Activated B cell treated with CpG ODN at 0.5 μM for 24 hours (primary cell): ENCODE measurements at regions of chr15 and their contacts with region 1.

Region 1: GRCh38 chr15:57146506-57147201 is 228.2 kb downstream of the TCF12 start:
- DNase-seq: no peak
- ATAC-seq: no peak
- H3K4me3 Mint-ChIP-seq: peak overlapping the region; percentile 48
- H3K27ac Mint-ChIP-seq: no peak overlapping the region
- H3K4me1 Mint-ChIP-seq: peaks cover 16% of the 10 kb centered on the region
- H3K27me3 Mint-ChIP-seq: no peaks in the 10 kb centered on the region
- CTCF ChIP-seq: peak; percentile 42

Region 2: GRCh38 chr15:56491110-56491722 is 655.4 kb before region 1 on chr15:
- CTCF ChIA-PET with region 1: interaction called, 11 read pairs
- POLR2A ChIA-PET with region 1: no interaction called
- intact Hi-C with region 1: loop called (anchors 1 kb)
- DNase-seq: no peak
- ATAC-seq: peak; percentile 90
- H3K4me3 Mint-ChIP-seq: no peak overlapping the region
- H3K27ac Mint-ChIP-seq: no peak overlapping the region
- H3K4me1 Mint-ChIP-seq: no peaks in the 10 kb centered on the region
- H3K27me3 Mint-ChIP-seq: no peaks in the 10 kb centered on the region
- CTCF ChIP-seq: no peak

Region 3: GRCh38 chr15:57017024-57017423 is 129.6 kb before region 1 on chr15:
- CTCF ChIA-PET with region 1: interaction called, 3 read pairs
- POLR2A ChIA-PET with region 1: no interaction called
- intact Hi-C with region 1: loop called (anchors 5 kb)
- DNase-seq: no peak
- ATAC-seq: no peak
- H3K4me3 Mint-ChIP-seq: no peak overlapping the region
- H3K27ac Mint-ChIP-seq: no peak overlapping the region
- H3K4me1 Mint-ChIP-seq: peaks cover 18% of the 10 kb centered on the region
- H3K27me3 Mint-ChIP-seq: no peaks in the 10 kb centered on the region
- CTCF ChIP-seq: no peak

Region 4: DNA sequence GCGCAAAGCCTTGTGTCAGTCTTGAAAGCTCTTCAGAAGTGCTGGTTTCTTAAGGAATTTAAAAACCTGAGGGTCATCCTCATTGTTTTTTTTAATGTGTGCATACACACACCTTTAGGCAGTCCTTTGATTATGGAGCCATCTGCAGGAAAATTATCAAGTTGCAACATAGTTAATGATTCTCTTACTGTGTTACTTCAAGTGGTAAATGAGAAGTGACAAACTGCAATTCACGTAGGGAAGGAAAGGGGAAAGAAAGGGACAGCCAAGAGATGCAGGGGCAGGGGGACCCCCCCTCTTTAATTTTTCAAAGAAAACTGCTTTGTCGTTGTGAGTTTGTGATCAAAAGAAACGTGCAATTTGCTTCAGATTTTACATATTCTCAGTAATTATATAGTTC is 67.2 kb after region 1 on chr15:
- CTCF ChIA-PET with region 1: interaction called, 38 read pairs
- POLR2A ChIA-PET with region 1: no interaction called
- intact Hi-C with region 1: loop called (anchors 2 kb)
- DNase-seq: no peak
- ATAC-seq: peak; percentile 65
- H3K4me3 Mint-ChIP-seq: no peak overlapping the region
- H3K27ac Mint-ChIP-seq: no peak overlapping the region
- H3K4me1 Mint-ChIP-seq: peaks cover 32% of the 10 kb centered on the region
- H3K27me3 Mint-ChIP-seq: no peaks in the 10 kb centered on the region
- CTCF ChIP-seq: no peak

Region 5: DNA sequence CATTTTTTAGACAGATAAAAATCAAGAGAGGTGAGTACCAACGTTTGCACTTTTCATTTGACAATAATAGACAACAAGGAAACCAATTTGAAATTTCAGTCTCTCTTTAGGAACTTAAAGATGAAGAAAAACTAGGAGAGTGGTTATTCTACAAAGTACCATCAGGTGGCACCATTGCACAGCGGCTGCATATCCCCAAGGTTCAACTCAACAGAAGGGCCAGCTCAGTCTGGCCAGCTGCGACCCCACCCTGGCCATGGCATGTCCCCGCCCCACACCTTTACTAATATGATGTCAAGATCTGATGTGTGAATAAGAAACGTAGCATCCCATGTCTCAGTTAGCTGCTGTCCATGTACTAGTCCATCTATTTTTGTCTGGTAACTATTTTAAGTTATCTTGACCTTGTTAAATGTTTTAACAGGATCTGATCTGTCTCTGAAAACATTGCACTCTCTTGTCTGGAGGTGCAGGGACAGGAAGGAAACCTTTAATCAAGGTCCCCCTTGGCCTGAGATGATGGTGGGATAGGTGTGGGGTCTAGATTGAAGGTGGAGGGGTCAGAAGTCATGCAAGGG is 194.1 kb after region 1 on chr15:
- CTCF ChIA-PET with region 1: interaction called, 25 read pairs
- POLR2A ChIA-PET with region 1: no interaction called
- intact Hi-C with region 1: loop called (anchors 1 kb)
- DNase-seq: no peak
- ATAC-seq: peak; percentile 58
- H3K4me3 Mint-ChIP-seq: no peak overlapping the region
- H3K27ac Mint-ChIP-seq: no peak overlapping the region
- H3K4me1 Mint-ChIP-seq: peaks cover 2% of the 10 kb centered on the region
- H3K27me3 Mint-ChIP-seq: peaks cover 9% of the 10 kb centered on the region
- CTCF ChIP-seq: peak; percentile 79

Region 6: DNA sequence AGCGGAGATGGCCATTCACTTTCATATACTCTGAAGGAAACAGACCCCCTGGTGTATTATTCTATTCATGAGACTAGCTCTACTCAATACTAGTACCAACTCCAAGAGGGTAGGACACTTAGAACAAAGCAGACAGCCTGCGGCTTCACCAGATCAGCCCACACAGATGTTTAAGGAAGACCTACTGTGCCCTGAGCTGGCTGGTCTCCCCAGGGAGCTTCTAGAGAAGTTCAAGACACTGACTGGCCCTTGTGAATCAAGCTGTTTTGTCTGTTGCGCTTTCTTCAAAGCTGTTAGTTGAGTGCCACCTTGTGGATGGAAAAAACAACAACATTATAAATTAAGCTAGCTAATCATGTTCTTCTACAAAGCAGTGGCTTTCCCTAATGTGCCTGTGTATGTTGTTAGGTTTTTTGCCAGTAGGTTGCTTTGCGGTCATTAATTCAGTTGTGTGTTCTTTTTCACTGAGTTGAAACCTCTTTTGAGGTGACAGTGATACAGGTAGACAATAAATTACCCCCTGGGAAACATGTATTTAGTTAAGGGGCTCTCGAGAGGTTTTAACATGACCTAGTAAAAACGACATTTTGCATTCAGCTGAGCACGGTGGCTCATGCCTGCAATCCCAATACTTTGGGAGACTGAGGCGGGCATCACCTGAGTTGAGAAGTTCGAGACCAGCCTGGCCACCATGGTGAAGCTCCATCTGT is 380.9 kb after region 1 on chr15:
- CTCF ChIA-PET with region 1: interaction called, 125 read pairs
- POLR2A ChIA-PET with region 1: interaction called, 4 read pairs
- intact Hi-C with region 1: loop called (anchors 1 kb)
- DNase-seq: peak; percentile 25
- ATAC-seq: peak; percentile 99
- H3K4me3 Mint-ChIP-seq: no peak overlapping the region
- H3K27ac Mint-ChIP-seq: no peak overlapping the region
- H3K4me1 Mint-ChIP-seq: peaks cover 11% of the 10 kb centered on the region
- H3K27me3 Mint-ChIP-seq: peaks cover 3% of the 10 kb centered on the region
- CTCF ChIP-seq: no peak

Region 7: DNA sequence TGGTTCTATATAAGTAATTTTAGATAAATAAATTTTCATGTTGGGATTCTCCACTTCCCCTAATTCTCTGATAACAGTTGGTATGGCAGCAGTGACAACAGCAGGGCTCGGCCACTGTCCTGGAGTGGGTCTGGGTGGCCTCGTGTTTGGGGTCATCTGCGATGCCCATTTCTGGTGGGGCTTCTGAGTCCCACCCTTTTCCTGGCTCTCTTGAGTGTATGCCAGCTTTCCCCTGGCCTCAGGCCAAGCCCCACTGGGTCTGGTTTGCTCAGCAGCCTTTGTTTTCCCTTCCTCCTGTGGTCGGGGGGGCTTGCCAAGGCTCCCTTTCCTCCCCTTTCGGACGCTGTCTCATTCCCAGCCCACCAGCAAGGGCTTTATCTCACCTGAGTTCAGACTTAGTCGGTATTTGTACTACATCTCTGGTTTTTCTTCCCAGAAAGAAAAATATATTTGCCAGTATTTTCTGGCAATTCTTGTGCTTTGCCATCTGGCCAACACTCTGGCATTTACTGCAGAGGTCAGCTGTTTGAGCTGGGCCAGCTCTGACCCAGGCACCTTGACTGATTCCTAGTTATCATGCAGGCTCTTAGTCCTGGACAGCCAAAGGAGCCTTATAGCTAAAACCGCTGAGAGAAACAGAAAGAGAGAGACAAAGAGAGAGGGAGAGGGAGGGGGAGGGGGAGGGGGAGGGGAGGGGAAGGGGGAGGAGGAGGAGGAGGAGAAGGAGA is 480.2 kb after region 1 on chr15:
- CTCF ChIA-PET with region 1: no interaction called
- POLR2A ChIA-PET with region 1: no interaction called
- intact Hi-C with region 1: no loop called
- DNase-seq: no peak
- ATAC-seq: no peak
- H3K4me3 Mint-ChIP-seq: no peak overlapping the region
- H3K27ac Mint-ChIP-seq: no peak overlapping the region
- H3K4me1 Mint-ChIP-seq: no peaks in the 10 kb centered on the region
- H3K27me3 Mint-ChIP-seq: no peaks in the 10 kb centered on the region
- CTCF ChIP-seq: no peak